ENCODE measurements at regions of chr12 and their contacts with region 1.

Region 1: GRCh38 chr12:105218434-105218833 is 17.5 kb downstream of the APPL2 start:
- DNase-seq: peak in 4 of 5 donors; percentile 35 to 67 (median 44)
- ATAC-seq: peak; percentile 66 to 83 (median 68)
- H3K4me3 ChIP-seq: no peak overlapping the region
- H3K27ac ChIP-seq: peak overlapping the region in 10 of 12 donors; percentile 23 to 68 (median 52)
- H3K4me1 ChIP-seq: peaks cover 0 to 61% (median 47%) of the 10 kb centered on the region in 12 donors
- H3K27me3 ChIP-seq: no peaks in the 10 kb centered on the region
- CTCF ChIP-seq: peak in 1 of 12 donors; percentile 21
- POLR2A ChIP-seq: no peak

Region 2: GRCh38 chr12:105100998-105101397 is 117.4 kb before region 1 on chr12:
- intact Hi-C with region 1: no loop called
- DNase-seq: no peak
- ATAC-seq: no peak
- H3K4me3 ChIP-seq: no peak overlapping the region
- H3K27ac ChIP-seq: no peak overlapping the region
- H3K4me1 ChIP-seq: no peaks in the 10 kb centered on the region
- H3K27me3 ChIP-seq: no peaks in the 10 kb centered on the region
- CTCF ChIP-seq: peak in 3 of 12 donors; percentile 14 to 23 (median 18)
- POLR2A ChIP-seq: no peak

Region 3: DNA sequence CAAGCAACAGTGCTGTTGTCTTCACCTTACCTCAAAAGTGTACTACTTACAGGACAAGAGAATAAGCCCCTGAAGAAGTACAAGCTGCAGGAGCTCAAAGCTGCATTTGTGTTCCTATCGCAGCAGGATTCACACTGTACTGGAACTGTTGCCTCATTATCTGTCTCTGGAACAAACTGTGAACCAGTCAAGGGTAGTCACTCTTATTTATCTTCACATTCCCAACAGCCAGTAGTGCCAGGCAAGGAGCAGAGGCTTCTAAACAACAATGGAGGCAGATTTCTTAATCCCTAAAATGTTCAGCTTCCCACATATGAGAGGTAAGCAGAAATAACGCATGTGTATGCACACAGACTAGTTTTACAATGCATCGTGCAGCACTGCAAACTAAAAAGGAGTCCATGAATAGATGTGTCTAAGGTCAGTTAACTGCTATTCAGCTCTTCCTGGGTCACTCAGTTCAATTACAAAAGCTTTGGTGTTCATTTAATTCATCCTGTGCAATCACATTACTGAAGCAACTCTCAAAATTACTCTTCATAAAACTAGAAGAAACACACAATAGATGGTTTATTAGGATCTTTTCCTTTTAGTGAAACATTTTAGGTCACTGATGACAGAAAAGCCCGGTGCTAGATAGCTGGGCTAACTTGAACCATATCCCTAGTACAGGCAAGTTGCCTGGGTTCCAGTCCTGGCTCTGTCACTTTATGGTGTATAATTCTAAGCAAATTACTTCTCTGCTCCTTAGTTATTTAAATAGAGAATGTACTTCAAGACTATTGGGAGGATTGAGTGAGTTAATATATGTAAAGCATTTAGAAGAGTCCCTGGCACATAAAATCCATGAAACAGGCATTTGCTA is 14.8 kb after region 1 on chr12:
- intact Hi-C with region 1: loop called in 1 of 10 experiments (anchors 2 kb)
- DNase-seq: no peak
- ATAC-seq: peak; percentile 39 to 72 (median 48)
- H3K4me3 ChIP-seq: peak overlapping the region in 8 of 12 donors; percentile 5 to 97 (median 71)
- H3K27ac ChIP-seq: peak overlapping the region; percentile 6 to 95 (median 53)
- H3K4me1 ChIP-seq: peaks cover 9 to 74% (median 47%) of the 10 kb centered on the region in 12 donors
- H3K27me3 ChIP-seq: no peaks in the 10 kb centered on the region
- CTCF ChIP-seq: no peak
- POLR2A ChIP-seq: no peak